Endothelial cell of umbilical vein (primary cell): ENCODE measurements at regions of chr2 and their contacts with region 1.

Region 1: DNA sequence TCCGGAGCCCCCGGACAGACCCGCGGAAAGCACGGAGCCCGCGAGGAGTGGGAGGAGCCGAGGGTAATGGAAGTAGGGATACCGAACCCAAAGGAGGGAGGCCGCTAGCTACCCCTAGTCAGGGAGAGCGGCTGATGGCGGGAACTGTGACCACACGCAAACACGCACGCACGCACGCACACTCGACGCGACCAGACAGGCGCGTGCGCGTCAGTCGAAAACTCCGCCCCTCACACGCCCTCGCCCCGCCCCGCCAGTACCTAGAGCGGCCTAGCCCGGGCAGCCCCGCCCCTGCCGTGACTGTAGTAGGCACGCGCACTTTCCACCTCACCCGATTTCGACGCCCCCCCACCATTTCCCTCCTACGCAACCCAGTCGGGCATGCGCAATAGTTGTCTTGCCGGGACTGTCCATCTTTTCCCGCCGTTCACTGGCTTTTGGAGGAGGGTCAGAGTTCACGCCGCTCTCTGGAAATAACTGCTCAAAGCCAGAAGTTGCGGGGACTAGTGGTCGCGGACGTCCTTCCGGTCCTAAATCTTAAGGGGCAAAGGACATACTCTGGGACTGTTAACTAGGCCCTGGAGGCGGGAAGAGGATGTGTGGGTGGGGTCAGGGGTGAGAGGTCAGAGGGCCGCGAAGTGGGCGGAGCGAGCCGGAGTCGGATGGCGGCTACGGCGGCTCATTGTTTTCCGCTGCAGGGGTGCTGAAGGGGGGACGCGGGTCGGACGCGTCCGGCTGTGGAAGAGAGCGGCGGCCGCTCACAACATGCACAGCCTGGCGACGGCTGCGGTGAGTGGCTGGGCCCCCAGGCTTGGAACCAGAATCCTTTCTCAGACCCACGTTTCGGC is at the starts of genes CNOT9 and USP37:
- DNase-seq: peak; percentile 99
- H3K4me3 ChIP-seq: peak within 1 kb of the TSS; percentile 58 to 81 (median 71)
- H3K27ac ChIP-seq: peak within 1 kb of the TSS; percentile 94
- H3K4me1 ChIP-seq: peaks cover 17% of the 10 kb centered on the region
- H3K27me3 ChIP-seq: no peaks in the 10 kb centered on the region
- CTCF ChIP-seq: no peak
- POLR2A ChIP-seq: peak; percentile 81
- total RNA-seq, gene CNOT9: 63.2 and 68.9 TPM in 2 replicates
- total RNA-seq, gene USP37: 13.1 and 14.4 TPM in 2 replicates

Region 2: GRCh38 chr2:218322895-218323808 is 245.3 kb before region 1 on chr2:
- CTCF ChIA-PET with region 1: no interaction called
- POLR2A ChIA-PET with region 1: no interaction called
- dilution Hi-C with region 1: no loop called
- intact Hi-C with region 1: loop called (anchors 2 kb)
- DNase-seq: peak; percentile 95
- H3K4me3 ChIP-seq: peak overlapping the region; percentile 49 to 71 (median 67)
- H3K27ac ChIP-seq: peak overlapping the region; percentile 91
- H3K4me1 ChIP-seq: peaks cover 24% of the 10 kb centered on the region
- H3K27me3 ChIP-seq: no peaks in the 10 kb centered on the region
- CTCF ChIP-seq: no peak
- POLR2A ChIP-seq: no peak

Region 3: DNA sequence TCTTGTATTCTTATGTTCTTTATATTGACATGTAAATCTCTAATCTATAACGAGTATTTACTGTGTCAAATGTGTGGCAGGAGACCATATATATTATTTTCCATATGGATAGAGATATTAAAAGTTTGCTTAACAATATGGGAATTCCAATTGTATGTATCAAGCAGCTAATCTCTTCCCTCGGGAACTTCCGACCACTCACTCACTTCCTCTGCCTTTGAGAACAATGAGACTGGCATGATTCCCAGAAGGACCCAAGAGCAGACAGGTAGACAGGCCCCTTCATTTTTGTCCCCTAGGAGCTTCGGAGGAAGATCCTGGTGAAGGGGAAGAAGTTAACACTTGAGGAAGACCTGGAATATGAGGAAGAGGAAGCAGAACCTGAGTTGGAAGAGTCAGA is 63.4 kb after region 1 on chr2:
- CTCF ChIA-PET with region 1: no interaction called
- POLR2A ChIA-PET with region 1: no interaction called
- dilution Hi-C with region 1: no loop called
- intact Hi-C with region 1: loop called (anchors 2 kb)
- DNase-seq: peak; percentile 95
- H3K4me3 ChIP-seq: no peak overlapping the region
- H3K27ac ChIP-seq: peak overlapping the region; percentile 78
- H3K4me1 ChIP-seq: peaks cover 20% of the 10 kb centered on the region
- H3K27me3 ChIP-seq: no peaks in the 10 kb centered on the region
- CTCF ChIP-seq: no peak
- POLR2A ChIP-seq: peak; percentile 59

Region 4: GRCh38 chr2:219177552-219178376 is 609.4 kb after region 1 on chr2 and contains the start of gene RETREG2:
- CTCF ChIA-PET with region 1: no interaction called
- POLR2A ChIA-PET with region 1: no interaction called
- dilution Hi-C with region 1: no loop called
- intact Hi-C with region 1: loop called (anchors 5 kb)
- DNase-seq: peak; percentile 93
- H3K4me3 ChIP-seq: peak within 1 kb of the TSS; percentile 44 to 81 (median 67)
- H3K27ac ChIP-seq: peak within 1 kb of the TSS; percentile 62
- H3K4me1 ChIP-seq: peaks cover 18% of the 10 kb centered on the region
- H3K27me3 ChIP-seq: no peaks in the 10 kb centered on the region
- CTCF ChIP-seq: peak in 1 of 2 donors; percentile 25
- POLR2A ChIP-seq: peak; percentile 97
- total RNA-seq, gene RETREG2: 58.2 and 59.5 TPM in 2 replicates